PC-9 (cell line): ENCODE measurements at regions of chr11 and their contacts with region 1.

Region 1: DNA sequence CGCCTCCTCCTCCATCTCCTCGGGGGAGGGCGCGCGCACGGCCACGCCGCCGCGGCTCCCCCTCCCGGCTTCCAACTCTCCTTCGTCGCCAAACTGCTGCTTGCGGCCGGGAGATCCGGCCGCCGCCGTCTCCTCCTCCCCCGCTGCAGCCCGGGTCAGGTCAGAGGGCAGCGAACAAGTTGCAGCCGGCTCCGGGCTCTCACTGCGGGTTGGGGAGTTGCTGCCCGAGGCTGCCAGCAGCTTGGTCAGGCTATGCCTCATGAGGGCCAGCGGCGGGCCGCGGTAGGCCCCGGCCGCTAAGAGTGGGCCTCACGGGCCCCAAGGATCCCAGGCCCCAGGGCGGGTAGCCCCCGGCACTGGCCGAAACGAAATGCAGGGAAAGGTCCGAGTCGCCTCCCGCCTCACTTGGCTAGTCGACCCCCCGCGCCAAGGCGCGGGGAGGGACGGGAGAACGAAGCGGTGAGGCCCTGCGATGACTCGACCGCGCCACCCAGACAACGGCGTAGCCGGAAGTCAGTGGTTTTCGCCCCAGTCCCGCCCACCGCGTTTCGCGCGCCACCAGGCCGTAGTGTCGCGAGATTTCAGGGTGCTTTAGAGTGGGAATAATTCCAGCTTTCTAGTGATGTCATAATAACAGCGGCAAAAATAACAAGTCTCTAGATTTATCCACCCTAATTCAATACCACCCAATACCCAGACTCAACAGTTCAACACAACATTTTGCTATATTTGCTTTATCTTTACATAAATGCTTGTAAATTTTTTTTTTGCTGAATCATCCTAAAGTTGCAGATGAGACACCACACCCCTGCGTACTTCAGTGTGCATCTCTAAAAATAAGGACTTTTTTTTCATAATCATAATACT is at the start of gene CREBZF:
- DNase-seq: peak; percentile 88 to 93
- H3K4me3 ChIP-seq: peak within 1 kb of the TSS; percentile 98
- H3K27ac ChIP-seq: peak within 1 kb of the TSS; percentile 93
- H3K4me1 ChIP-seq: peaks cover 34% of the 10 kb centered on the region
- H3K27me3 ChIP-seq: no peaks in the 10 kb centered on the region
- CTCF ChIP-seq: no peak
- total RNA-seq, gene CREBZF: 60.3 and 66.1 TPM in 2 replicates

Region 2: GRCh38 chr11:85582111-85582510 is 82.7 kb before region 1 on chr11:
- CTCF ChIA-PET with region 1: no interaction called
- POLR2A ChIA-PET with region 1: no interaction called
- intact Hi-C with region 1: no loop called
- DNase-seq: no peak
- H3K4me3 ChIP-seq: no peak overlapping the region
- H3K27ac ChIP-seq: no peak overlapping the region
- H3K4me1 ChIP-seq: no peaks in the 10 kb centered on the region
- H3K27me3 ChIP-seq: no peaks in the 10 kb centered on the region
- CTCF ChIP-seq: no peak

Region 3: GRCh38 chr11:85627998-85628770 is 36.7 kb before region 1 on chr11 and contains the start of gene TMEM126B:
- CTCF ChIA-PET with region 1: no interaction called
- POLR2A ChIA-PET with region 1: no interaction called
- intact Hi-C with region 1: loop called (anchors 2 kb)
- DNase-seq: peak; percentile 96 to 99
- H3K4me3 ChIP-seq: peak within 1 kb of the TSS; percentile 79
- H3K27ac ChIP-seq: peak within 1 kb of the TSS; percentile 65
- H3K4me1 ChIP-seq: peaks cover 29% of the 10 kb centered on the region
- H3K27me3 ChIP-seq: no peaks in the 10 kb centered on the region
- CTCF ChIP-seq: no peak
- total RNA-seq, gene TMEM126B: 32.6 and 38.1 TPM in 2 replicates

Region 4: GRCh38 chr11:85647604-85648299 is 17.1 kb before region 1 on chr11 and contains the start of gene TMEM126A:
- CTCF ChIA-PET with region 1: interaction called, 4 read pairs
- POLR2A ChIA-PET with region 1: interaction called, 4 read pairs
- intact Hi-C with region 1: loop called (anchors 2 kb)
- DNase-seq: peak; percentile 90 to 95
- H3K4me3 ChIP-seq: peak within 1 kb of the TSS; percentile 72
- H3K27ac ChIP-seq: peak within 1 kb of the TSS; percentile 76
- H3K4me1 ChIP-seq: peaks cover 24% of the 10 kb centered on the region
- H3K27me3 ChIP-seq: no peaks in the 10 kb centered on the region
- CTCF ChIP-seq: no peak
- total RNA-seq, gene TMEM126A: 17.7 and 26.3 TPM in 2 replicates

Region 5: GRCh38 chr11:87421422-87421821 is 1756.6 kb after region 1 on chr11:
- CTCF ChIA-PET with region 1: no interaction called
- POLR2A ChIA-PET with region 1: no interaction called
- intact Hi-C with region 1: loop called (anchors 5 kb)
- DNase-seq: peak in 1 of 2 experiments; percentile 59
- H3K4me3 ChIP-seq: no peak overlapping the region
- H3K27ac ChIP-seq: no peak overlapping the region
- H3K4me1 ChIP-seq: no peaks in the 10 kb centered on the region
- H3K27me3 ChIP-seq: no peaks in the 10 kb centered on the region
- CTCF ChIP-seq: peak; percentile 86